ENCODE measurements at regions of chr3 and their contacts with region 1.

Region 1: GRCh38 chr3:128825117-128825725 is 54.2 kb upstream of the ACAD9 start:
- DNase-seq: no peak
- ATAC-seq: no peak
- H3K4me3 ChIP-seq: no peak overlapping the region
- H3K4me3 Mint-ChIP-seq: no peak overlapping the region
- H3K27ac ChIP-seq: no peak overlapping the region
- H3K27ac Mint-ChIP-seq: no peak overlapping the region
- H3K4me1 ChIP-seq: no peaks in the 10 kb centered on the region
- H3K4me1 Mint-ChIP-seq: no peaks in the 10 kb centered on the region
- H3K27me3 ChIP-seq: no peaks in the 10 kb centered on the region
- H3K27me3 Mint-ChIP-seq: no peaks in the 10 kb centered on the region
- CTCF ChIP-seq: no peak

Region 2: GRCh38 chr3:128814519-128815317 is 10.5 kb before region 1 on chr3:
- CTCF ChIA-PET with region 1: no interaction called
- POLR2A ChIA-PET with region 1: interaction called, 11 read pairs
- intact Hi-C with region 1: no loop called
- DNase-seq: no peak
- ATAC-seq: no peak
- H3K4me3 ChIP-seq: no peak overlapping the region
- H3K4me3 Mint-ChIP-seq: no peak overlapping the region
- H3K27ac ChIP-seq: no peak overlapping the region
- H3K27ac Mint-ChIP-seq: no peak overlapping the region
- H3K4me1 ChIP-seq: no peaks in the 10 kb centered on the region
- H3K4me1 Mint-ChIP-seq: no peaks in the 10 kb centered on the region
- H3K27me3 ChIP-seq: no peaks in the 10 kb centered on the region
- H3K27me3 Mint-ChIP-seq: no peaks in the 10 kb centered on the region
- CTCF ChIP-seq: no peak

Measured in B cell (primary cell).